ENCODE measurements at regions of chr20 and their contacts with region 1.

Region 1: DNA sequence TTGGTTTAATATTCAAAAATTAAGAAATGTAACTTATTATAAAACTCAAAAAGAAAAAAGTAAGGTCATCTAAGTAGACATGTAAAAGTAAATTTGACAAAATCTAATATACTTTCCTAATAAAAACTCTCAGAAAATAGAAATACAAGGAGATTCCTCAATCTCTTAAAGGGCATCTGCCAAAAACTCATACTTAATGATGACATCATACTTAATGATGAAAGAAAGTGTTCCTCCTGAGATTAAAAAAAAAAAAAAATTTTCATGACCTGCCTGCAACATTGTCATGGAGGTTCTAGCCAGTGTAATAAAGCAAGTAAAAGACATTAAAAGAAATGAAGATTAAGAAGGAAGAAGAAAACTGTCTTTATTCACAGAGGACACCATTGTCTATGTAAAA is 325.7 kb upstream of the BTBD3 start:
- DNase-seq: no peak
- H3K4me3 ChIP-seq: no peak overlapping the region
- H3K27ac ChIP-seq: no peak overlapping the region
- H3K4me1 ChIP-seq: no peaks in the 10 kb centered on the region
- H3K27me3 ChIP-seq: no peaks in the 10 kb centered on the region
- CTCF ChIP-seq: no peak
- EP300 ChIP-seq: no peak
- POLR2A ChIP-seq: no peak

Region 2: GRCh38 chr20:11609677-11610076 is 17.7 kb after region 1 on chr20:
- intact Hi-C with region 1: loop called in 1 of 4 experiments (anchors 2 kb)
- DNase-seq: no peak
- H3K4me3 ChIP-seq: no peak overlapping the region
- H3K27ac ChIP-seq: no peak overlapping the region
- H3K4me1 ChIP-seq: no peaks in the 10 kb centered on the region
- H3K27me3 ChIP-seq: no peaks in the 10 kb centered on the region
- CTCF ChIP-seq: no peak
- EP300 ChIP-seq: no peak
- POLR2A ChIP-seq: no peak